AG04450 (cell line): ENCODE measurements at regions of chr2 and their contacts with region 1.

Region 1: DNA sequence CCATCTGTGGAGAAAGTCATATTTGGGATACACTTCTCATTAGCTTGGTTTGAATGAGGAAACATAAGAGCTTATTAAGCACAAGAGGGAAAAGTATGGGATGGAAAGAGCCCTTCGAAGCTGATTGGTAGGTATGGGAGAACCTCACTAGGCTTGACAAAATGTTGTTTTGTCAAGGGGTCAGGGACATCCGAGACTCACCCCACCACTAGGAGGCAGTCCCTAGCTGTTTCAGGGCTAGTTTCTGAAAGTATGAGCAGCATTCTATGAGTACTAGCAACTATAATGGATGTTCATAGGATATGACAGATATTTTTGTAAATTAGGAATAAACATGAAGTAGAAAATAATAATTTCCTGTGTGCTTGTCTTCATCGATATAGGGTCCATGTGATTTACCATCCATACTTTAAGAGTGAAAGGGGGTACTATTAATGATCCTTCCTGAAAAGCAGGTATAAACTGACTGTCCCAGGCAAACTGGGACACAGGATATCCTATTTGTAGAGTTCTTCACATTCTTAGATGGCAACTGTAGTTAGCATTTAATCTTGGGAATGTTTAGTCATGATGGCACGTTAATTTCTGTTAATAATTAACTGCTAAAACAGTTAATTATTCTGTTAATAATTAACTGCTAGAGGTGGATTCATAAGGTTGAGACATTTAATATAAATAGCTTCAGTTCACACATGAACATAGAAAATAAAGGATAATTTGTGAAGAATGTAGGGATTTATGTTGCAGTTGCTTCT is 28.4 kb downstream of the OTX1 start:
- DNase-seq: no peak
- H3K4me3 ChIP-seq: no peak overlapping the region
- H3K27ac ChIP-seq: no peak overlapping the region
- H3K27me3 ChIP-seq: no peaks in the 10 kb centered on the region
- CTCF ChIP-seq: peak; percentile 43

Region 2: GRCh38 chr2:63488118-63488713 is 409.2 kb after region 1 on chr2:
- CTCF ChIA-PET with region 1: interaction called, 14 read pairs
- POLR2A ChIA-PET with region 1: no interaction called
- DNase-seq: no peak
- H3K4me3 ChIP-seq: no peak overlapping the region
- H3K27ac ChIP-seq: no peak overlapping the region
- H3K27me3 ChIP-seq: no peaks in the 10 kb centered on the region
- CTCF ChIP-seq: peak; percentile 86